MCF 10A (cell line): ENCODE measurements at regions of chr15 and their contacts with region 1.

Region 1: DNA sequence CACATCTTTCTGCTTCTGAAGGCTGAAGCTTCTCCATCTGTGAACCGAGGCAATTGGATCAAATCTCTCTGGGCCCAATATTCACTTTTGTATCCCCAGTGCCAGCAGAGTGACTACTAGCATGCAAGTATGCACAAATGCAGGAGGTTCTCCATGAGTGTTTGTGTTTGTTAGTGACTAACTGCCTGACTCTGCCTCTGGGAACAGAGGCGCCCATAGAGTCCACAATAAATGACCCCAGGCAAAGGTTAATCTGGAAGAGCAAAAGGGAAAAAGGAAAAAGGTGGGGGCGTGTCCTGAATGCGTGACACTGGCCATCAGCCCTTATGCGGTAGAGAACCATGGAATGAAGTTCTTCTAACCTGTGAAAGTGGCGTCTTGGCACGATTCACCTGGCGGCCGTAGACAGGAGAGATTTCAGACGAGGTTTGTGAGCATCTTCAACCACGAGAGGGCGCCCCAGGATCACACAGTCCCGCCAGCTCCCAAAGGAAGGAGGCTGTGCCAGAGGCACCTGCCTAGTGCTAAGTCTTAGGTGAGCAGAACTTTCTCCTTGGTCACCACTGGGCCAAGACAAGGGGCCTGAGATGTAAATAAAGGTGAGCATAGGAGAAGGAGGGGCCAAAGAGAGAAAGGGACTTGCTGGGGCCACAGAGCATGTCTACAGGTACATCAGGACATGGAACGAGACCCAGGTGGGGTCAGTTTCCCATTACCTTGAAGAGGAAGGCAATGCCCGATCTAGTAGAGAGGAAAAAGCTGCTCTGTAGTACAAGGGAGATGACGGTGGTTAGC is 44.2 kb downstream of the RBPMS2 start:
- DNase-seq: peak; percentile 88
- H3K4me3 Mint-ChIP-seq: no peak overlapping the region
- H3K27ac Mint-ChIP-seq: no peak overlapping the region
- H3K4me1 Mint-ChIP-seq: peaks cover 16% of the 10 kb centered on the region
- H3K27me3 Mint-ChIP-seq: peaks cover 10% of the 10 kb centered on the region
- CTCF ChIP-seq: peak; percentile 88

Region 2: DNA sequence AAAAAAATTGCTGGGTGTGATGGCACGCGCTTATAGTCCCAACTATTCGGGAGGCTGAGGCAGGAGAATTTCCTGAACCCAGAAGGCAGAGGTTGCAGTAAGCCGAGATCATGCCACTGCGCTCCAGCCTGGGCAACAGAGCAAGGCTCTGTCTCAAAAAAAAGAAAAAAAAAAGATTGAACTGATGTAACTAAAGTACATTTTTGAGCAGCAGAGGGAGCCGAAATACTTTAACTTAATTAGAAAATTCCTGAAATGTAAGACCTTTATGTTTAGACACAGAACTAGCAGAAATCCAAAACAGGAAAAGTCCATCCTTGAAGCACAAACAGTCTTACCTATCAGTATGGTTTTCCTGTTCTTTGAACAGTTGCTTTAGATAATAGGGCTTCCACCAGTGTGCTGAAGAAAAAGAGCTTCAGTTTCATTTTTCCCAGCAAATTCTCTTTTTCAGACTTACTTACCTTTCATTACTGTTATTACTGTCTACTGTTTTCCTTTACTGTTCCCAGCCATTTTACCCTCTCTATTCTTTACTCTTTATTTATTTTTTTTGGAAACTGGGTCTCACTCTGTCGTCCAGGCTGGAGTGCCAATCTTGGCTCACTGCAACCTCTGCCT is 304.3 kb before region 1 on chr15:
- CTCF ChIA-PET with region 1: interaction called, 4 read pairs
- POLR2A ChIA-PET with region 1: no interaction called
- intact Hi-C with region 1: loop called (anchors 1 kb)
- DNase-seq: peak; percentile 35
- H3K4me3 Mint-ChIP-seq: no peak overlapping the region
- H3K27ac Mint-ChIP-seq: no peak overlapping the region
- H3K4me1 Mint-ChIP-seq: peaks cover 7% of the 10 kb centered on the region
- H3K27me3 Mint-ChIP-seq: no peaks in the 10 kb centered on the region
- CTCF ChIP-seq: peak; percentile 39

Region 3: DNA sequence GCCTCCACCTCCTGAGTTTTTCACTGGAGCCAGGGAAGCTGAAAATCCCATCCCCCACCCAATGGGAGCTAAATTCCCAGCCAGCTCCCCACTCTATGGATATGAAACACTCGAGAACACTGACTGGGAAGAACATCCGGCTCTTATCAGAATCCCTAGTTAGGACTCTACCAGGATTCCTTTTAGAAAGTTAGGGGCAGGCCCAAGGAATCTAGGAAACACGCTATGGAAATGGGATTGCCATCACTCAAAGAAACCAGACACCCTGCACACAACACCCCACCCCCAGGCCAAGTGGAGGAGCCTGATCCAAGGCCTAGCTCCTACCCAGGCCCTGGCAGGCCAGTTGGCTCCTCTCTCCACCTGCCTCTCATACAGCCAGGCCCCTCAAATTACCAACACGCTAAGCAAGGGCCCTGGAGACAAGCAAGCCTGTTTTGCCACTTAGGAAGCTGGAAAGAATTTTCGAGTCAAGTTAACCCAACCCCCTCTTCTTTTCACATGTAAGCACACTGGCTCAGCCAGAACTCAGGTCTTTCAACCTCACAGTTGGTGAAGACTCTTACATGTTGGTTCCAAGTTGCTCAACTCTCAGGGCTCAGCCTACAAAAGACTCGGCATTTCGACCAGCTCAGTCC is 31.3 kb before region 1 on chr15:
- CTCF ChIA-PET with region 1: interaction called, 16 read pairs
- POLR2A ChIA-PET with region 1: interaction called, 4 read pairs
- intact Hi-C with region 1: no loop called
- DNase-seq: peak; percentile 34
- H3K4me3 Mint-ChIP-seq: peak overlapping the region; percentile 72
- H3K27ac Mint-ChIP-seq: peak overlapping the region; percentile 68
- H3K4me1 Mint-ChIP-seq: peaks cover 59% of the 10 kb centered on the region
- H3K27me3 Mint-ChIP-seq: no peaks in the 10 kb centered on the region
- CTCF ChIP-seq: no peak

Region 4: GRCh38 chr15:64809649-64810496 is 78.7 kb after region 1 on chr15:
- CTCF ChIA-PET with region 1: interaction called, 233 read pairs
- POLR2A ChIA-PET with region 1: interaction called, 5 read pairs
- intact Hi-C with region 1: loop called (anchors 1 kb)
- DNase-seq: peak; percentile 79
- H3K4me3 Mint-ChIP-seq: no peak overlapping the region
- H3K27ac Mint-ChIP-seq: no peak overlapping the region
- H3K4me1 Mint-ChIP-seq: no peaks in the 10 kb centered on the region
- H3K27me3 Mint-ChIP-seq: no peaks in the 10 kb centered on the region
- CTCF ChIP-seq: peak; percentile 88

Region 5: GRCh38 chr15:65275728-65276126 is 544.5 kb after region 1 on chr15:
- CTCF ChIA-PET with region 1: interaction called, 4 read pairs
- POLR2A ChIA-PET with region 1: no interaction called
- intact Hi-C with region 1: loop called (anchors 10 kb)
- DNase-seq: no peak
- H3K4me3 Mint-ChIP-seq: no peak overlapping the region
- H3K27ac Mint-ChIP-seq: no peak overlapping the region
- H3K4me1 Mint-ChIP-seq: no peaks in the 10 kb centered on the region
- H3K27me3 Mint-ChIP-seq: no peaks in the 10 kb centered on the region
- CTCF ChIP-seq: no peak